ENCODE measurements at regions of chr16 and their contacts with region 1.

Region 1: DNA sequence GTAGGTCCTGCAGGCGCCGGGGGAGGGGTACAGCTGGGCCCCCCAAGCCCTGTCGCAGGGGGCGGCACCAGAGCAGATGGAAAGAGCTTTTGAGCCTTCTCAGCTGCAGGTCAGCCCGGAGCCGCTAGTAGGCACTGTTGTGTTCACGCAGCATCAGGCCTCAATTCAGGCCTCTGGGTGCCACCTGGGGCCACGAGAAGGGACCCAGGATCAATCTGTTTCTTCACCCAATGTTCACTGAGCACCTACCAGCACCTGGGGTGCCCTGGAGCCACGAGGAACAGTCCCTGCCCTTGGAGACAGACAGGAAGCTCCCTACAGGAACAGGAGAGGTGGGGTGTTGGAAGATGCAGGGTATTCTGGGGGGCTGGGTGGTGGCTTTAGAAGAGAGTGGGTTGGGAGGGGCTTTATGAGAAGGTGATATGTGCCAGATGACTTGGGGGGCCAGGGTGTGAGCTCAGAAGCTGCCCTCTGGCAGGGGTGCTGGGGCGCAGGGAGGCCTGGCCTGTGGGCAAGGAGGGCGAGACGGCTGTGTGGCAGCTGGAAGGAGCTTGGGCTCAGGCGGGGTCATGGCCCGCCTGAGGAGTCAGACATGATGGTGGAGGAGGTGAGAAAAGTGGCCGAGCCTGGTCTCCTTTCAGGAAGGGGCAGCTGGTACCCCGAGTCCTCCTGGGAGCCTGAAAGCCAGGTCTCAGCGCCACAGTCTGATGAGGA is 121.9 kb upstream of the GSE1 start:
- DNase-seq: peak; percentile 56
- H3K4me3 Mint-ChIP-seq: no peak overlapping the region
- H3K27ac Mint-ChIP-seq: no peak overlapping the region
- H3K4me1 Mint-ChIP-seq: peaks cover 4% of the 10 kb centered on the region
- H3K27me3 Mint-ChIP-seq: no peaks in the 10 kb centered on the region

Region 2: DNA sequence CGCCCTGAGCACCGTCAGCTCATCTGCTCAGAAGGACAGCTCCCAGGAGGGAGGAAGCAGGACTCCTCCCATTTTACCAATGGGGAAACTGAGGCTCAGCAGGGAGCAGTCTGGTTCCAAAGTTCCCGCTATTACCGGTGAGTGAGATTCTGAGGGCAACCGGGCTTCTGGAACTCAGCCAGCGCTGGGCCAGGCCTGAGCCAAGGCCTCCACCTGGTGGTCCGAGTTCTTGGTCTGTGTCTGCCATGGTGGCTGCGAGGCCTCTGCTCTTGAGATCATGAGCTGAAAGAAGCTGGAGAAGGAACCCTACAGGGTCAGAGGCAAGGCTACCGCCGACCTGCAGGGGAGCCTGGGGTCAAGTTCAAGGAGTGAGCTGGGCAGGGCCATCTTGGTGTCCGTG is 11.1 kb after region 1 on chr16:
- CTCF ChIA-PET with region 1: interaction called, 13 read pairs
- intact Hi-C with region 1: no loop called
- DNase-seq: no peak
- H3K4me3 Mint-ChIP-seq: no peak overlapping the region
- H3K27ac Mint-ChIP-seq: no peak overlapping the region
- H3K4me1 Mint-ChIP-seq: no peaks in the 10 kb centered on the region
- H3K27me3 Mint-ChIP-seq: no peaks in the 10 kb centered on the region

Measured in activated naive CD4-positive, alpha-beta T cell treated with anti-CD3 and anti-CD28 coated beads for 36 hours (primary cell).